Posterior vena cava (tissue), 2 donors: ENCODE measurements at regions of chr11 and their contacts with region 1.

Region 1: DNA sequence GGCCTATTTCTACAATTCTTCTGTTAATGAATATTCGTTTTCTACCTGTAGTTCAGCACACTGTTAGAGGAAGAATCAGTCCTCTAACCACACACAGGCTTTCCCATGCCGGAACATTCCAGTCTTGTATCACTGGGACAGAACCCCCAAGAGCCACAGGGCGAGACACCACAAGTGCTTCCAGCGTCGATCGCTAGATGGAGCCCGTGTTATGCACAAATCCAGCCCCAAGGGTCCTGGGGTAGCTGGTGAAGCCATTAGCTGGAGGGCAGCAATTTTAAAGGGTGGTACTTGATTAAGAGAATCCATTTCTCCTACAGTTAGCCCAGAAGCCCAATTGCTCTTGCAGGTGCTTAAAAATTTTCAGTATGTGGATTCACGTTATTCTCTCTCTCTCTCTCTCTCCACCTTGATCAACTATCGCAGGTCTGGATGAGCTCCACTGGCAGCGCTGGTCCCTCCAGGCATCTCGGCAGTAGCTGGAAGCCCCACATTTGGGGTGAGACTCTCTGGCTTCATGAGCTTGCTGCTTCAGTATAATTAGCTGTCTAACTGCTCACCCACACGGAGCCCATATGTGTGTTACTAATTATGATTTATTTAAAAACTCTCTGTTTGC is 148.2 kb upstream of the SNX19 start:
- DNase-seq: no peak

Region 2: DNA sequence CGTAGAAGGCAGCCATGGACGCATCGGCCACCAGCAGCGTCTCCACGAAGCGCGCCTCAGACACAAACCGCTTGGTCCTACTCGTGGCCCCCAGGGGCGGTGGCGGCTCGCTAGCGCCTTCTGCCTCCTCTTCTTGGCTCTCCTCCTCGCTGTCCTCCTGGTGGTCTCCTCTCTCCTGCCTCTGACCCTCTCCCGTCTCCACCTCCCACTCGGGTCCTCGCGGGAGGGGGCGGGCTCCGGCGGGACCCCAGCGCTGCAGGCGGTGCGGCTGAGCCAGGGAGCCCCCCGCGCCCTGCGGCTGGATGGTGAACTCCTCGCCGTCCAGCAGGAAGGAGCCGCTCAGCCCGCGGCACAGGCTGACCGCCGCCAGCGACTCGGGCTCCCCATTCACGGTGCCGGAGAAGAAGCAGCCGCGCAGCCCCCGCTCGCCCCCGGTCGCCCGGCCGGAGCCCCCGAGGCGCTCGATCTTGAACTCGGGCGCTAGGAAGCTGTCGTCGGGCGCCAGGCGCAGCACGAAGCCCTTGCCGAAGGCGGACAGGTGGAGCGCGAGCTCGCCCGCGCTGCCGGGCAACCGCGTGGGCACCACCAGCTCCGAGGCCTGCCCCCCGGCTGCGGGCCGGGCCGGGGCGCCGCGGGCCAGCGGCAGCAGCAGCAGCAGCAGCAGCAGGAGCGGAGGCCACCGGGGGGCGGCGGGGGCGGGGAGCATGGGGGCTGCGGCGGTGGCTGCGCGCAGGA is 636.7 kb before region 1 on chr11:
- intact Hi-C with region 1: no loop called
- DNase-seq: no peak

Region 3: DNA sequence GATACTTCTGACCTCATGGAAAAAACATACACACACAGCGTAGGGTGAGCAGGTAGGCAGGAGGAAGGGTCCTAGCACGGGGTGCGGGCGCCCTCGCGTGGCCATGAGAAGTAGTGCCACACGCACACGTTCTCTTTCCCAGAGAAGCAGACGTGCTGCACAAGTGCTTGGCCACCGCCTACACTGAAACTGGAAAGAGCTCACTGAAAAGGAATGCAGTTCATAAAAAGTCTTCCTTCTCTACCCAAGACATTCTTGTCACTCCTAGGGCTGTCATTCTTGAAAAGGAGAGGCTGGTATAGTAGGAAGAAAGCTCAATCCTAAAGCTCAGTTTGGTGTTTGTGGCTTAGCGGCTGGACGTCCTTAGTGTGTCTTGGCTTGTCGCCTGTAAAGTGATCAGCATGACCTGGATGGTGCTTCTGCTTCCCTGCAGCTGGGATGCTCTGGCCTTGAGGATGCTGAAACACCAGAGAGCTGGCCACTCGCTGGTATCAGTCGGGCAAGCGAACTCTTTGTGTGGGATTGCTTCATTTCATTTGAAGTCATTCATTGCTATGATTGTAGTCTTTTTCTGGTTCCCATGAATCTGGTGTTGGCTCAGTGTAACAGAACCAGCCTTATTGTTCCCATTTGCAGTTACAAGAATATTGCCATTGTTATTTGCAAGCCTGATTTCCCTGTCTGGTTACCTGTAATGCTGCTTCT is 609.7 kb after region 1 on chr11:
- intact Hi-C with region 1: loop called in 1 of 2 experiments (anchors 10 kb)
- DNase-seq: peak; percentile 92